Activated CD4-positive, alpha-beta T cell treated with anti-CD3 and anti-CD28 coated beads, Interleukin-2, amount 10 ng/mL, durations not matched to agents 24 days and 14 days (primary cell): ENCODE measurements at regions of chr4 and their contacts with region 1.

Region 1: GRCh38 chr4:15457406-15458201 is 12.1 kb upstream of the CC2D2A start:
- DNase-seq: peak; percentile 59
- H3K4me3 Mint-ChIP-seq: no peak overlapping the region
- H3K27ac Mint-ChIP-seq: no peak overlapping the region
- H3K4me1 Mint-ChIP-seq: no peaks in the 10 kb centered on the region
- H3K27me3 Mint-ChIP-seq: peaks cover 24% of the 10 kb centered on the region

Region 2: GRCh38 chr4:15231265-15232091 is 226.1 kb before region 1 on chr4:
- intact Hi-C with region 1: loop called (anchors 1 kb)
- DNase-seq: peak; percentile 91
- H3K4me3 Mint-ChIP-seq: no peak overlapping the region
- H3K27ac Mint-ChIP-seq: no peak overlapping the region
- H3K4me1 Mint-ChIP-seq: peaks cover 24% of the 10 kb centered on the region
- H3K27me3 Mint-ChIP-seq: peaks cover 1% of the 10 kb centered on the region

Region 3: DNA sequence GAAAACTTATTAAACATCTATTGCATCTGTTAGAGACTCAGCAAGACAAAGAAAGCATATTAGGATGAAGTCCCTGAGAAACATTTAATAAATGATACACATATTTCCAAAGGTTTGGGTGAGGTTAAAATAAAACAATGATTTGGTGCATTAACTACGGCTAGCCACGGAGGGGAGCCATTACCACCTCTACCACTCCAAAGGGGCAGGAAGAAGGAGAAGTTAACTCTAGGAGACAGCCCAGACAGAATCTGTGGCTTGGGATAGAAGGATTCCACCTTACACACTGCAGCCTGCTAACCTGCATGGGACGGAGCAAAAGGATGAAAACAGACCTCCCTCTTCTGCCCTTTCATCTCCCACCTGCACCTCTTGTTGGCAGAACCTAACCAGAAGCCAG is 218.9 kb before region 1 on chr4:
- intact Hi-C with region 1: loop called (anchors 1 kb)
- DNase-seq: peak; percentile 74
- H3K4me3 Mint-ChIP-seq: no peak overlapping the region
- H3K27ac Mint-ChIP-seq: no peak overlapping the region
- H3K4me1 Mint-ChIP-seq: peaks cover 13% of the 10 kb centered on the region
- H3K27me3 Mint-ChIP-seq: peaks cover 2% of the 10 kb centered on the region

Region 4: GRCh38 chr4:15291122-15291521 is 166.5 kb before region 1 on chr4:
- intact Hi-C with region 1: no loop called
- DNase-seq: no peak
- H3K4me3 Mint-ChIP-seq: no peak overlapping the region
- H3K27ac Mint-ChIP-seq: no peak overlapping the region
- H3K4me1 Mint-ChIP-seq: no peaks in the 10 kb centered on the region
- H3K27me3 Mint-ChIP-seq: peaks cover 3% of the 10 kb centered on the region